CD8-positive, alpha-beta memory T cell (primary cell): ENCODE measurements at regions of chr15 and their contacts with region 1.

Region 1: GRCh38 chr15:69475769-69476358 is 23.2 kb downstream of the RPLP1 start:
- DNase-seq: peak; percentile 60 to 81 (median 65)
- H3K4me3 ChIP-seq: no peak overlapping the region
- H3K4me3 Mint-ChIP-seq: no peak overlapping the region
- H3K27ac ChIP-seq: no peak overlapping the region
- H3K27ac Mint-ChIP-seq: peak overlapping the region in 1 of 8 donors; percentile 29
- H3K4me1 ChIP-seq: no peaks in the 10 kb centered on the region
- H3K4me1 Mint-ChIP-seq: no peaks in the 10 kb centered on the region
- H3K27me3 ChIP-seq: no peaks in the 10 kb centered on the region
- H3K27me3 Mint-ChIP-seq: peaks cover 8 to 9% of the 10 kb centered on the region in 2 donors

Region 2: GRCh38 chr15:69462493-69463181 is 13.2 kb before region 1 on chr15:
- CTCF ChIA-PET with region 1: interaction called, 22 read pairs
- POLR2A ChIA-PET with region 1: no interaction called
- DNase-seq: peak; percentile 87 to 93 (median 90)
- H3K4me3 ChIP-seq: peak overlapping the region; percentile 93
- H3K4me3 Mint-ChIP-seq: peak overlapping the region; percentile 90 to 97 (median 91)
- H3K27ac ChIP-seq: peak overlapping the region; percentile 82
- H3K27ac Mint-ChIP-seq: peak overlapping the region; percentile 73 to 96 (median 93)
- H3K4me1 ChIP-seq: peaks cover 31% of the 10 kb centered on the region
- H3K4me1 Mint-ChIP-seq: peaks cover 18 to 54% (median 25%) of the 10 kb centered on the region in 3 donors
- H3K27me3 ChIP-seq: no peaks in the 10 kb centered on the region
- H3K27me3 Mint-ChIP-seq: peaks cover 0 to 2% of the 10 kb centered on the region in 2 donors

Region 3: DNA sequence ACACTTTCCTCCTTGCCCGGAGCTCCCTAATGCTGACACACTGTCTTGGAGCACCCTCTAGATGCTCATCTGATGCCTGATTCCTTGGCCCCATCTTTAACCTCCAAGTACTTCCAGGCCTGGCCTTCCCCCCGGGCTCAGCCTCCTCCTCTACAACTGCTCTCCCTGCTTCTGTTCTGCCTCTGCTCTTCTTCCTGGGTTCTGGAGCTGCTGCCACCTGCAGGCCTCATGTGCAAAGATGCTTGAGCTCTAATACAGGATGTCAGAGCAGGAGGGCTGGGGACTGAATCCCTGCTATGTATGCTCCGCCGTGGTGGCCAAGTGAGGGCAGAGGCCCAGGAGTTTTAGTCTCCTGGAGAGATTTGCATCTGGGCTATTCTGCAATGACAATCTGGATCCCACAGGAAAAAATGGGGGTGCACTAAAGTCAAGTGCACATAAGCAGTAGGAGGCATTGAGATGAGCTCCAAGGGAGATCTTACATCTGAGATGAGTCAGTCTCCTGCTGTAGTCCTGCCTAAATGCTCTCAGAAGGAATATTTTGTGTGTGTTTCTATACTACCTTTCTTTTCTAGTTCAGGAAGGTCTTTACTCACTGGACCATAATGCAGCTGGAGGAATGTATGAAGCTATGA is 991.1 kb after region 1 on chr15:
- CTCF ChIA-PET with region 1: interaction called, 48 read pairs
- POLR2A ChIA-PET with region 1: no interaction called
- DNase-seq: peak in 3 of 5 donors; percentile 26 to 58 (median 36)
- H3K4me3 ChIP-seq: no peak overlapping the region
- H3K4me3 Mint-ChIP-seq: no peak overlapping the region
- H3K27ac ChIP-seq: no peak overlapping the region
- H3K27ac Mint-ChIP-seq: peak overlapping the region in 2 of 8 donors; percentile 2 to 58
- H3K4me1 ChIP-seq: peaks cover 6% of the 10 kb centered on the region
- H3K4me1 Mint-ChIP-seq: peaks cover 5 to 6% (median 5%) of the 10 kb centered on the region in 3 donors
- H3K27me3 ChIP-seq: peaks cover 5% of the 10 kb centered on the region
- H3K27me3 Mint-ChIP-seq: peaks cover 19 to 26% of the 10 kb centered on the region in 2 donors

Region 4: GRCh38 chr15:70488002-70488605 is 1012.2 kb after region 1 on chr15:
- CTCF ChIA-PET with region 1: interaction called, 18 read pairs
- POLR2A ChIA-PET with region 1: no interaction called
- DNase-seq: peak; percentile 55 to 80 (median 60)
- H3K4me3 ChIP-seq: no peak overlapping the region
- H3K4me3 Mint-ChIP-seq: peak overlapping the region in 1 of 7 donors; percentile 13
- H3K27ac ChIP-seq: no peak overlapping the region
- H3K27ac Mint-ChIP-seq: peak overlapping the region in 2 of 8 donors; percentile 11 to 68
- H3K4me1 ChIP-seq: peaks cover 66% of the 10 kb centered on the region
- H3K4me1 Mint-ChIP-seq: peaks cover 60 to 68% (median 63%) of the 10 kb centered on the region in 3 donors
- H3K27me3 ChIP-seq: no peaks in the 10 kb centered on the region
- H3K27me3 Mint-ChIP-seq: peaks cover 8 to 17% of the 10 kb centered on the region in 2 donors